ENCODE measurements at regions of chr14 and their contacts with region 1.

Region 1: GRCh38 chr14:83455561-83455960 is 1921.9 kb upstream of the SEL1L start:
- DNase-seq: no peak
- ATAC-seq: no peak
- H3K4me3 Mint-ChIP-seq: no peak overlapping the region
- H3K27ac Mint-ChIP-seq: no peak overlapping the region
- H3K4me1 Mint-ChIP-seq: peaks cover 19% of the 10 kb centered on the region
- H3K27me3 Mint-ChIP-seq: peaks cover 24% of the 10 kb centered on the region
- CTCF ChIP-seq: no peak

Region 2: DNA sequence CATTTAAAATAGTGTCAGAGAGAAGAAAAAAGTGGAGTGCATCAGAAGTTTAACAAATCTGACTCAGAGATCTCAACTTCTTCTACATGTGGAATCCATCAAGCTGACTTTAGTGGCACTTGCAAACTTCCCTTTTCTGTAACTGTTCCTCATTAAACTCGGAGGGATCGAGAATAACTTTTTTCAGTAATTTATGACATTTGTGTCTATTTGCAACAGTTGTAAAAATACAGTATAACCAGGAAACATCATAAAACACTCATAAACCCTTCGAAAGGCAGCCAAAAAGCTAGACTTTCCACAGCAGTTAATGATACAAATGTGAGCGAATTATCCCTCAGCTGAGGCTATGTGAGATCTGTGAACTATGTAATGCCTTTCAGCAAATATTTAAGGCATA is 14.9 kb after region 1 on chr14:
- CTCF ChIA-PET with region 1: no interaction called
- POLR2A ChIA-PET with region 1: no interaction called
- DNase-seq: no peak
- ATAC-seq: no peak
- H3K4me3 Mint-ChIP-seq: no peak overlapping the region
- H3K27ac Mint-ChIP-seq: no peak overlapping the region
- H3K4me1 Mint-ChIP-seq: 0 out of 2 replicates have a peak, but pooled peaks cover 4% of the 10 kb centered on the region
- H3K27me3 Mint-ChIP-seq: no peaks in the 10 kb centered on the region; the same call in 1 of the 2 replicates
- CTCF ChIP-seq: no peak

Region 3: GRCh38 chr14:84657911-84658310 is 1202.3 kb after region 1 on chr14:
- CTCF ChIA-PET with region 1: no interaction called
- POLR2A ChIA-PET with region 1: interaction called, 11 read pairs
- DNase-seq: no peak
- ATAC-seq: no peak
- H3K4me3 Mint-ChIP-seq: no peak overlapping the region
- H3K27ac Mint-ChIP-seq: no peak overlapping the region
- H3K4me1 Mint-ChIP-seq: no peaks in the 10 kb centered on the region
- H3K27me3 Mint-ChIP-seq: no peaks in the 10 kb centered on the region
- CTCF ChIP-seq: no peak